ENCODE measurements at regions of chr1 and their contacts with region 1.

Region 1: GRCh38 chr1:29933067-29933466 is 696.7 kb downstream of the PTPRU start:
- DNase-seq: no peak
- H3K4me3 ChIP-seq: no peak overlapping the region
- H3K27ac ChIP-seq: no peak overlapping the region
- H3K4me1 ChIP-seq: no peaks in the 10 kb centered on the region
- H3K27me3 ChIP-seq: no peaks in the 10 kb centered on the region
- CTCF ChIP-seq: no peak
- POLR2A ChIP-seq: no peak

Region 2: DNA sequence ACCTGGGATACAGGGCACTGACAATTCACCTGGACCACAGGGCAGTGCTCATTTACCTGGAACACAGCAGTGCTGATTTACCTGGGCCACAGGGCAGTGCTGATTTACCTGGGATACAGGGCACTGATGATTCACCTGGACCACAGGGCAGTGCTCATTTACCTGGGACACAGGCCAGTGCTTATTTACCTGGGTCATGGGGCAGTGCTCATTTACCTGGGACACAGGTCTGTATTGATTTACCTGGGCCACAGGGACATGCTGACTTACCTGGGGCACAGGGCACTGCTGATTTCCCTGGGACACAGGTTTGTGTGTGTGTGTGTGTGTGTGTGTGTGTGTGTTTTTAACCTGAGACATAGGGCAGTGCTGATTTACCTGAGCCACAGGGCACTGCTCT is 528.6 kb after region 1 on chr1:
- intact Hi-C with region 1: loop called (anchors 5 kb)
- DNase-seq: no peak
- H3K4me3 ChIP-seq: no peak overlapping the region
- H3K27ac ChIP-seq: no peak overlapping the region
- H3K4me1 ChIP-seq: no peaks in the 10 kb centered on the region
- H3K27me3 ChIP-seq: no peaks in the 10 kb centered on the region
- CTCF ChIP-seq: no peak
- POLR2A ChIP-seq: no peak